ENCODE measurements at regions of chr1 and their contacts with region 1.

Region 1: GRCh38 chr1:90721210-90722194 is 4.4 kb upstream of the BARHL2 start:
- DNase-seq: peak; percentile 83
- ATAC-seq: no peak
- H3K4me3 Mint-ChIP-seq: peak overlapping the region; percentile 38; the same call in 1 of the 2 replicates
- H3K27ac Mint-ChIP-seq: no peak overlapping the region
- H3K4me1 Mint-ChIP-seq: peaks cover 63% of the 10 kb centered on the region
- H3K27me3 Mint-ChIP-seq: peaks cover 99% of the 10 kb centered on the region
- CTCF ChIP-seq: peak; percentile 81

Region 2: GRCh38 chr1:90834886-90835660 is 113.6 kb after region 1 on chr1:
- CTCF ChIA-PET with region 1: interaction called, 23 read pairs
- POLR2A ChIA-PET with region 1: no interaction called
- DNase-seq: no peak
- ATAC-seq: peak; percentile 16
- H3K4me3 Mint-ChIP-seq: peak overlapping the region; percentile 61
- H3K27ac Mint-ChIP-seq: no peak overlapping the region
- H3K4me1 Mint-ChIP-seq: peaks cover 65% of the 10 kb centered on the region
- H3K27me3 Mint-ChIP-seq: peaks cover 89% of the 10 kb centered on the region
- CTCF ChIP-seq: no peak

Region 3: GRCh38 chr1:90850898-90851710 is 129.6 kb after region 1 on chr1:
- CTCF ChIA-PET with region 1: interaction called, 23 read pairs
- POLR2A ChIA-PET with region 1: no interaction called
- DNase-seq: peak; percentile 80
- ATAC-seq: peak; percentile 92
- H3K4me3 Mint-ChIP-seq: peak overlapping the region; percentile 79
- H3K27ac Mint-ChIP-seq: no peak overlapping the region
- H3K4me1 Mint-ChIP-seq: peaks cover 19% of the 10 kb centered on the region
- H3K27me3 Mint-ChIP-seq: peaks cover 74% of the 10 kb centered on the region
- CTCF ChIP-seq: peak; percentile 72

Region 4: DNA sequence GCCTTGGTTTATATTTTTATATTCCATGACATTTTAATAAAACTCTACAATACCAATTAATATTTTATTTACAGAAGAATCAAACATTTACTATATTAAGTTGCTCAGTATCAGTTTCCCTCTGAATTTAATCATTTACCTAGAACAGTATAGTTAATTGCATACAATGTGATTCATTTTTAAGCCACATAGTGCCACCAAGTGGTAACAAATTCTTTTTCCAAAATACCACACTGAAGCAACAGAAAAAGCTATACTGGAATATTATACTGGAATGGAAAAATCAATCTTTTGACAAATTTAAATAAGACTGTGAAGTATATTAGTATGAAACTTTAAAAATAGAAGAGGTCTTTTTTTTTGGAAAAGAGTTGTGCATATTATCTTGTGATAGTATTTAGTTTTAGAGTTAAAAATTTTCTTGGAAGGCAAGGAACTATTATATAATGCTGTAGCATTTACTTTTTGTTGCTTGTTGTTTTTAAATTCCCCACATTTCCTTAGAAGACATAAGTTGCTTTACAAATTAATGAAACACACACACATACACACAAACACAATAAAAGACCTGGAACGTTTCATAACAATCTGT is 243.0 kb after region 1 on chr1:
- CTCF ChIA-PET with region 1: interaction called, 23 read pairs
- POLR2A ChIA-PET with region 1: interaction called, 4 read pairs
- DNase-seq: no peak
- ATAC-seq: peak; percentile 53
- H3K4me3 Mint-ChIP-seq: no peak overlapping the region
- H3K27ac Mint-ChIP-seq: no peak overlapping the region
- H3K4me1 Mint-ChIP-seq: peaks cover 13% of the 10 kb centered on the region
- H3K27me3 Mint-ChIP-seq: no peaks in the 10 kb centered on the region
- CTCF ChIP-seq: no peak

Measured in WTC11 (cell line).